ENCODE measurements at regions of chr6 and their contacts with region 1.

Region 1: DNA sequence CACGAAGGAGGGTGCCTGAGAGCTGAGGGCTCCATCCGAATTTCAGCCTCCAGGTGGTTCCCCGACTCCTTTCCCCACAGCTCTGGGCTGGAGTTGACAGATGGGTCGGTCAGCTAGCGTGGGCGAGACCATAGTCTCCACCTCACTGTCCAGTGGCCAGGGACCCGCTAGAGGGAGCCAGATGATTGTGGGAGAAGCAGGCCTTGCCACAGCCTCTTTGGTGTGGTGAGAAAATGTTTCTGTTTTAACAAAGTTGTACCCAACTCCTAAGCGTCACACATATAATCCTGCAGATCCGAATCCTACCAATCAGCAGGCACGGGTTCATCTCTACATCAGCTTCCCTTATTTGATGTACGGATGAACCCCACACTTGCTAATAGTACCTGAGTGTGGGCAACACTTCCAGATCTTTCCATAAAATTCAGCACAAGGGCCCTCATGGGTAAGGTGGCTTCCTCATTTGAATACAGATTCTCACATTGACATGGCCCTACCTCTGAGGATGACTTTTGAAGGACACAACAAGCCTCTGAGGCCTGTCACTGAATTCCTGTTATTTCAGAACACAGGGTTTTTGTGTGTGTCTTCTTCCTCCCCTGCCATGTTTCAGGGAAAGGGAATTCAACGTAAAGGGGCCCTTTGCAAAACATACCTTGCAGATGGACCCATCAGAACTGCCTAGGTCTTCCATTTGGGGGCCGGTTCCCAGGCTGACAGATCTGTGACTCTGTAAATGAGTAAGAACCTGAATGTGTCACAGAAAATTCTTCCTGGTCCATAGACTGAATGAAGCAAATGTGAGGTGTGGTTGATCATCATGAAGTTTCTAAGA is 103.2 kb upstream of the DUSP22 start:
- DNase-seq: peak; percentile 79
- ATAC-seq: peak; percentile 96
- H3K4me3 ChIP-seq: no peak overlapping the region
- H3K27ac ChIP-seq: no peak overlapping the region
- H3K4me1 ChIP-seq: peaks cover 3% of the 10 kb centered on the region; the same call in 1 of the 2 replicates
- H3K27me3 ChIP-seq: peaks cover 8% of the 10 kb centered on the region; the same call in 1 of the 2 replicates
- CTCF ChIP-seq: peak; percentile 95
- POLR2A ChIP-seq: peak; percentile 54; the same call in 1 of the 2 replicates
- RAD21 ChIP-seq: peak; percentile 97

Region 2: DNA sequence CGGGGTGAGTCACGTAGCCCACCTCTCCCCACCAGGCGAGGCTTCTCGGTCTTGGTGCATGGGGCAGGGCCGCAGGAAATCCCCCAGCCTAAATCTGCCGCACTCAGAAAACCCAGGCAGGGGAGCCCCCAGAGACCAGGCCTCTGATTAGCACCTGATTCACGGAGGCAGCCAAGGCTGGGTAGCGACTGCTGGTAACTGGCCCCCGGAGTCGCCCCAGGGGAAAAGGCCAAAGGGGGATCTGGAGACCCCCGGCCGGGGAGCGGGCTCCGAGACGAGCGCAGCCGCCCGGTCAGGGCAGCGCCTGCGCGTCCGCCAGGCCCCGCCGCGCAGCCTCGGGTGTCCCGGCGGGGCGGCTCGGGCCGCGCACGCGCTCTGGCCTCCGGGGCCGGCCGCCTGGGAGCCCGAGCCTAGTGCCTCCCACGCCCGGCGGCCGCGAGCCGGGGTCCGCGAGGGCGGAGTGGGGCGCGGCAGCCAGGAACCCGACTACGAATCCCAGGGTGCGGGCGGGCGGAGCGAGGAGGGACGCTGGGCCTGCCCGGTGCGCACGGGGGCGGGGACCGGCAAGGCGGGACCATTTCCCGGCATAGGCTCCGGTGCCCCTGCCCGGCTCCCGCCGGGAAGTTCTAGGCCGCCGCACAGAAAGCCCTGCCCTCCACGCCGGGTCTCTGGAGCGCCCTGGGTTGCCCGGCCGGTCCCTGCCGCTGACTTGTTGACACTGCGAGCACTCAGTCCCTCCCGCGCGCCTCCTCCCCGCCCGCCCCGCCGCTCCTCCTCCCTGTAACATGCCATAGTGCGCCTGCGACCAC is 102.9 kb after region 1 on chr6 and contains the start of gene DUSP22:
- CTCF ChIA-PET with region 1: no interaction called
- POLR2A ChIA-PET with region 1: no interaction called
- dilution Hi-C with region 1: no loop called
- in situ Hi-C with region 1: no loop called
- intact Hi-C with region 1: loop called (anchors 2 kb)
- DNase-seq: peak; percentile 77
- ATAC-seq: peak; percentile 95
- H3K4me3 ChIP-seq: peak within 1 kb of the TSS; percentile 94
- H3K27ac ChIP-seq: peak within 1 kb of the TSS; percentile 92
- H3K4me1 ChIP-seq: peaks cover 4% of the 10 kb centered on the region; the same call in 1 of the 2 replicates
- H3K27me3 ChIP-seq: peaks cover 13% of the 10 kb centered on the region
- CTCF ChIP-seq: no peak
- POLR2A ChIP-seq: peak; percentile 66
- RAD21 ChIP-seq: no peak
- total RNA-seq, gene DUSP22: 6.9 and 8.2 TPM in 2 replicates

Region 3: DNA sequence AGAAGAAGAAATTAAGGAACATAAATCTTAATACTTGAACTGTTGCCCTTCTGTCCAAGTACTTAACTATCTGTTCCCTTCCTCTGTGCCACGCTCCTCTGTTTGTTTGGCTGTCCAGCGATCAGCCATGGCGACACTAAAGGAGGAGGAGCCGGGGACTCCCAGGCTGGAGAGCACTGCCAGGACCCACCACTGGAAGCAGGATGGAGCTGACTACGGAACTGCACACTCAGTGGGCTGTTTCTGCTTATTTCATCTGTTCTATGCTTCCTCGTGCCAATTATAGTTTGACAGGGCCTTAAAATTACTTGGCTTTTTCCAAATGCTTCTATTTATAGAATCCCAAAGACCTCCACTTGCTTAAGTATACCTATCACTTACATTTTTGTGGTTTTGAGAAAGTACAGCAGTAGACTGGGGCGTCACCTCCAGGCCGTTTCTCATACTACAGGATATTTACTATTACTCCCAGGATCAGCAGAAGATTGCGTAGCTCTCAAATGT is 219.6 kb after region 1 on chr6:
- CTCF ChIA-PET with region 1: interaction called, 3 read pairs
- POLR2A ChIA-PET with region 1: no interaction called
- dilution Hi-C with region 1: no loop called
- in situ Hi-C with region 1: no loop called
- intact Hi-C with region 1: loop called (anchors 2 kb)
- DNase-seq: peak; percentile 38
- ATAC-seq: peak; percentile 87
- H3K4me3 ChIP-seq: no peak overlapping the region
- H3K27ac ChIP-seq: no peak overlapping the region
- H3K4me1 ChIP-seq: no peaks in the 10 kb centered on the region
- H3K27me3 ChIP-seq: peaks cover 38% of the 10 kb centered on the region
- CTCF ChIP-seq: peak; percentile 40
- POLR2A ChIP-seq: no peak
- RAD21 ChIP-seq: peak; percentile 31

Region 4: DNA sequence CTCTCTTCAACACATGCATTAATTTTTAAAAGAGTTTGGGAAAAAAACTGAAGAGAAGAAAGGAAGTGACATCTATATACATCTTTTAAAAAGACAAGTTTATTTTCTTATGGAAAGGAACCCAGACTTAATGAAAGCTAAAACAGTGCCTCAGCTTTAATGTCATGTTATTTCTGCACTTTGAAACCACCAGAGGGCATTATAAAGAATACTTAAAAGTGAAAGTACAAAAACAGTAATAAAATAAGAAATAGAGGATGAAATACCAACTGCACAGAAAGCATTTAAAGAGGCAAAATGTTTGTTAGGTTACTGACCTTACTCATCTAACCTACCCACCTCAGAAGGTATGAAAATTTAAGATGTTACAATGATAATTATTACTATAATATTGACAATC is 369.1 kb after region 1 on chr6:
- CTCF ChIA-PET with region 1: interaction called, 4 read pairs
- POLR2A ChIA-PET with region 1: no interaction called
- dilution Hi-C with region 1: no loop called
- in situ Hi-C with region 1: no loop called
- intact Hi-C with region 1: loop called (anchors 5 kb)
- DNase-seq: no peak
- ATAC-seq: peak; percentile 54; the same call in 1 of the 2 replicates
- H3K4me3 ChIP-seq: no peak overlapping the region
- H3K27ac ChIP-seq: no peak overlapping the region
- H3K4me1 ChIP-seq: no peaks in the 10 kb centered on the region; the same call in 1 of the 2 replicates
- H3K27me3 ChIP-seq: no peaks in the 10 kb centered on the region
- CTCF ChIP-seq: peak; percentile 32
- POLR2A ChIP-seq: no peak
- RAD21 ChIP-seq: 0 out of 2 replicates have a peak, but pooled peaks have one; percentile 6

Region 5: DNA sequence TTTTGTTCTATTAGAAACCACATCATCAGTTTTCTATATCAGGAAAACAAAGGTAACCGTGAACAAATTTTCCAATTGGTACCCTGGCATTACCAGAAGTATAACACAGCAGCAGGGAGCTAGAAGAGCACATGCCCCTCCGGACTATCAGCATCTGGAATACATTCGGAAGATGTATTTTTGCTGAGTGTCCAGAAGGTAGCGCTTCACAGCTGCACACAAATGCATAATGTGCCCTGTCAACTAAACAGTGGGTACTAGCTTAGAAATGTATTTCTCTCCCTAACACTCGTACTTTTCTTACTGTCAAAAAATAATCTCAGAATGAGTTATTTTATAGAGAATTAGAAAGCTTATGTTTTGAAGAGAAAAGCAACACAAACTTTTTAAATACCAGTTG is 390.3 kb after region 1 on chr6:
- CTCF ChIA-PET with region 1: interaction called, 3 read pairs
- POLR2A ChIA-PET with region 1: no interaction called
- dilution Hi-C with region 1: no loop called
- in situ Hi-C with region 1: no loop called
- intact Hi-C with region 1: loop called (anchors 5 kb)
- DNase-seq: peak; percentile 45
- ATAC-seq: peak; percentile 71
- H3K4me3 ChIP-seq: no peak overlapping the region
- H3K27ac ChIP-seq: no peak overlapping the region
- H3K4me1 ChIP-seq: peaks cover 9% of the 10 kb centered on the region
- H3K27me3 ChIP-seq: no peaks in the 10 kb centered on the region
- CTCF ChIP-seq: peak; percentile 33; the same call in 1 of the 2 replicates
- POLR2A ChIP-seq: no peak
- RAD21 ChIP-seq: no peak

Region 6: GRCh38 chr6:722077-722524 is 533.1 kb after region 1 on chr6:
- CTCF ChIA-PET with region 1: no interaction called
- POLR2A ChIA-PET with region 1: no interaction called
- dilution Hi-C with region 1: no loop called
- in situ Hi-C with region 1: no loop called
- intact Hi-C with region 1: loop called (anchors 5 kb)
- DNase-seq: peak; percentile 90
- ATAC-seq: peak; percentile 99
- H3K4me3 ChIP-seq: no peak overlapping the region
- H3K27ac ChIP-seq: no peak overlapping the region
- H3K4me1 ChIP-seq: no peaks in the 10 kb centered on the region
- H3K27me3 ChIP-seq: peaks cover 6% of the 10 kb centered on the region; the same call in 1 of the 2 replicates
- CTCF ChIP-seq: peak; percentile 95
- POLR2A ChIP-seq: no peak
- RAD21 ChIP-seq: peak; percentile 71

Region 7: DNA sequence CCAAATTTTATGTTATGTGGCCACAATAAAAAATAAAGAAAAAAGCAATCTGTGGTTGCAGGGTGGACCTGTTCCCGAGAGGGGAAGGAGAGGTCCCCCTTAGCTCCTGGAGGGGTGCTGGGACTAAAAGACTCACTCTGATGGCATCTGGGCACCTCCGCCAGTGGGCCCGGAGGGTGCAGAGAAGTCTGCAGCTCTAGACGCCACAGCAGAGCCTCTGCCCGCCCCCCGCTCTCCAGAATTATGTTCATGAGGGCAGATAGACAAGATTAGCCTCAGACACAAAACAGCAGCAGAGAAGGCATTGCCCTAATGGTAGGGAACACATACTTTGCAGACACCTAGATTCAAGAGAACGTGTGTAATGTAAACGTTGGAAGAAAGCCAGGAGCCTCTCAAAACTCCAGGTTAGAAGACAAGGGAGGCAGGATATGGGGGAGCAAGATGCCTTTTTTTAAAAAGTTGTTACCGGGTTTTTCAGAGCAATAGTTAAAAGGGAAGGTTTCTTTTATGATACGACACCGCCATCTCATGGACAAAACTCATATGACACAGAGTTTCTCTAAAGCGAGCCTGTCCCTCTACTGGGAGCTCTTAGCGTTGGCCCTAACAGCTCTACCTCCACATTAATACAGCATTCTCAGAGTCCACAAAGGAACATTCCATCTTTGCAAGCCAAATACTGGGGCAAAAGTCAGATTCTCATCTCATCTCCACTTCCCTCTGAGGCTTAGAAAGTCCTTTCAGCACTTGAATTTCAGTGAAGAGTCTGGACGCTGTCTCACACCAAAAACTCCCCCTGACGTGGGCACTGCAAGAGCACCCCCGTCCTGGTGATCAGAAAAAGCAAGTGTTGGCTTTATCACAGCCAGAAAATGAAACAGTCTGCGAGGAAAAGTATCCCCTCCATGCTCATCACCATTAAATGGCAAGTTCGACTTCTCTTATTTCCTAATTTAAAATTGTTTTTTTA is 1247.6 kb after region 1 on chr6:
- CTCF ChIA-PET with region 1: no interaction called
- POLR2A ChIA-PET with region 1: no interaction called
- dilution Hi-C with region 1: no loop called
- in situ Hi-C with region 1: no loop called
- intact Hi-C with region 1: loop called (anchors 5 kb)
- DNase-seq: peak; percentile 72
- ATAC-seq: peak; percentile 99
- H3K4me3 ChIP-seq: no peak overlapping the region
- H3K27ac ChIP-seq: no peak overlapping the region
- H3K4me1 ChIP-seq: no peaks in the 10 kb centered on the region
- H3K27me3 ChIP-seq: peaks cover 20% of the 10 kb centered on the region
- CTCF ChIP-seq: peak; percentile 90
- POLR2A ChIP-seq: no peak
- RAD21 ChIP-seq: peak; percentile 84